PC-3 (cell line): ENCODE measurements at regions of chr15 and their contacts with region 1.

Region 1: DNA sequence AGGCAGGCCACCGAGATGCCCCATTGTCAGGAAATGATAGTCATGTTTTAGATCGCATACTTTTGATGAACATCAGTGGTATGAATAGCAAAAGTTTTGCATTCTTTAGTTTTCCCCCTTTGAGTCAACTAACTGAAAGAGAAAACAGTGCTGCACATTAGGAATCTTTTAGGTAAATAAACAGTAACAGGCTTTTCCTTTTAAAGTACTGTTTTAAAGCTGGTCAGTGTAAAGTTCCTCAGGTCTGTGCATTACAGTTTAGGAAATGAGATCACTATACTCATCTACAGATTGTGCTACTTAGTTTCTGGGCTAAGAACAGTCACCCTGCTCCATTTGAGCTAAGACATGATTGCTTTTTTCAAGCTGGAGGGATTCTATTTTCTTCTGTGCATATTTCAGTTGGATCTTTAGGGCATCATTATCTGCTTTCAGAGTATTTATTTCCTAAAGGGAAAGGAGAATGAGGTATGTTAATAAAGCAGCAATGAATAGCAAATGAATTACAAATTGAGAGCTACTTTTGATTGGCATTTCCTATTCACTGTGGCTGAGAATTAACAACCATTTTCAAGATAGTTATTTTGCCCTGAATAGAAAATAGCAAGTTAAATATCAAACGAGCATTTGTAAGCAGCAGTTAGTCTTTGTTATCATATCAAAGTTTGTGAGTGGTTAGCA is 36.5 kb downstream of the FAM98B start:
- DNase-seq: no peak
- ATAC-seq: no peak
- H3K4me3 ChIP-seq: no peak overlapping the region
- H3K27ac ChIP-seq: no peak overlapping the region
- H3K4me1 ChIP-seq: no peaks in the 10 kb centered on the region
- H3K27me3 ChIP-seq: no peaks in the 10 kb centered on the region
- CTCF ChIP-seq: no peak

Region 2: DNA sequence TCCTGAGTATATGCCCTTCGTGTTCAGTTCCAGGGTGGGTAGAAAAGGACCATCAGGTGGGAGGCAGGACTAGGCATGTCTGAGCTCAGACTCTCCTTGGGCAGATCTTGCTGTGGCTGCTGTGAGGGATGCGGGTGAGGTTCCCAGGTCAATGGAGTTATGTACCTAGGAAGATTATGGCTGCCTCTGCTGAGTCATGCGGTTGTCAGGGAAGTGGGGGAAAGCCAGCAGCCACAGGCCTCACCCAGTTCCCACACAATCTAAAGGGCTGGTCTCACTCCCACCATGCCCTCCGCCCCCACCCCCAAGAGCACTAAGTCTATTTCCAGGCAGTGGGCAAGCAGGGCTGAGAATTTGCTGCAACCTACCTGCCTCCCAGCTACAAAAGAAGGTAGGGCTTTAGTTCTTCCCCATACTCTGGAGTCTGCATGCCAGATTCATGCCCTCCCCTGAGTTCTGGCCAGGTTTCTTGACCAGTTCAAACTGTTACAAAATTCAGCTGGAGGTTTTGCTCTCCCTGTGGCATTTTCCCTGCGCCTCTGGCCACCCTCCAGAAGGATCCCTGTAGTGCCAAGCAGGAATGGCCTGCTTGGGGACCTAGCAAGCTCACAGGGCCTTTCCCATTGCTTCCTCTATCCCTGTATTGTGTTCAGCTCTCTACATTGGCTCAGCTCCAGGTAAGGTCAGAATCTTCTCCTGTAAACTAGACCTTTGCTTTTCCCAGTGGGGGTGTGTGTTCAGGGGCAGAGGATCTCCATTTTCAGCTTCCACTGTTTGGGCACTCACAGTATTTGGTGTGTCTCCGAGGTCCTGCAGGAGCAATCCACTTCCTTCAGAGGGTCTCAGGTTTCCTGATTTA is 568.6 kb before region 1 on chr15:
- CTCF ChIA-PET with region 1: no interaction called
- POLR2A ChIA-PET with region 1: interaction called, 10 read pairs
- intact Hi-C with region 1: no loop called
- DNase-seq: peak; percentile 58
- ATAC-seq: peak; percentile 45
- H3K4me3 ChIP-seq: no peak overlapping the region
- H3K27ac ChIP-seq: peak overlapping the region; percentile 79
- H3K4me1 ChIP-seq: peaks cover 27% of the 10 kb centered on the region
- H3K27me3 ChIP-seq: no peaks in the 10 kb centered on the region
- CTCF ChIP-seq: no peak